ENCODE measurements at regions of chr9 and their contacts with region 1.

Region 1: DNA sequence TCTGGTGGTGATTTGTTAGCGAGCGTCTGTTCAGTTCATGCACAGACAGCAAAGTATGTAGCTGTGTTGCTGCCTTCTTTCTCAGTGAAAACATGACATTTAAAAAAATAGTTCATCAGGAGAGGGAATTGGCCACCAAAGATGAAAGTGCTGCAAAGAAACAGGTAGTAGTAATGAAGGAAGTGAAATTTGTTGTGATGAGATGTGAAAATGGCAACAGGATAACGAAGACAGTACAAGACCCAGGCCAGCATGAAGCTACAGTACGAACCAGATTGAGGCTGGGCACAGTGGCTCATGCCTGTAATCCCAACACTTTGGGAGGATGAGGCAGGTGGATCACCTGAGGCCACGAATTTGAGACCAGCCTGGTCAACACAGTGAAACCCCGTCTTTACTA is 136.0 kb downstream of the SMARCA2 start:
- DNase-seq: no peak
- ATAC-seq: no peak
- H3K4me3 ChIP-seq: no peak overlapping the region
- H3K4me3 Mint-ChIP-seq: no peak overlapping the region
- H3K27ac ChIP-seq: no peak overlapping the region
- H3K27ac Mint-ChIP-seq: peak overlapping the region; percentile 10
- H3K4me1 ChIP-seq: peaks cover 4 to 8% of the 10 kb centered on the region in 2 donors
- H3K4me1 Mint-ChIP-seq: peaks cover 50% of the 10 kb centered on the region
- H3K27me3 ChIP-seq: no peaks in the 10 kb centered on the region
- H3K27me3 Mint-ChIP-seq: no peaks in the 10 kb centered on the region
- CTCF ChIP-seq: no peak

Region 2: GRCh38 chr9:1231998-1232919 is 918.9 kb before region 1 on chr9:
- CTCF ChIA-PET with region 1: no interaction called
- POLR2A ChIA-PET with region 1: no interaction called
- intact Hi-C with region 1: no loop called
- DNase-seq: no peak
- ATAC-seq: no peak
- H3K4me3 ChIP-seq: no peak overlapping the region
- H3K4me3 Mint-ChIP-seq: no peak overlapping the region
- H3K27ac ChIP-seq: no peak overlapping the region
- H3K27ac Mint-ChIP-seq: no peak overlapping the region
- H3K4me1 ChIP-seq: no peaks in the 10 kb centered on the region
- H3K4me1 Mint-ChIP-seq: no peaks in the 10 kb centered on the region
- H3K27me3 ChIP-seq: no peaks in the 10 kb centered on the region
- H3K27me3 Mint-ChIP-seq: no peaks in the 10 kb centered on the region
- CTCF ChIP-seq: no peak

Region 3: DNA sequence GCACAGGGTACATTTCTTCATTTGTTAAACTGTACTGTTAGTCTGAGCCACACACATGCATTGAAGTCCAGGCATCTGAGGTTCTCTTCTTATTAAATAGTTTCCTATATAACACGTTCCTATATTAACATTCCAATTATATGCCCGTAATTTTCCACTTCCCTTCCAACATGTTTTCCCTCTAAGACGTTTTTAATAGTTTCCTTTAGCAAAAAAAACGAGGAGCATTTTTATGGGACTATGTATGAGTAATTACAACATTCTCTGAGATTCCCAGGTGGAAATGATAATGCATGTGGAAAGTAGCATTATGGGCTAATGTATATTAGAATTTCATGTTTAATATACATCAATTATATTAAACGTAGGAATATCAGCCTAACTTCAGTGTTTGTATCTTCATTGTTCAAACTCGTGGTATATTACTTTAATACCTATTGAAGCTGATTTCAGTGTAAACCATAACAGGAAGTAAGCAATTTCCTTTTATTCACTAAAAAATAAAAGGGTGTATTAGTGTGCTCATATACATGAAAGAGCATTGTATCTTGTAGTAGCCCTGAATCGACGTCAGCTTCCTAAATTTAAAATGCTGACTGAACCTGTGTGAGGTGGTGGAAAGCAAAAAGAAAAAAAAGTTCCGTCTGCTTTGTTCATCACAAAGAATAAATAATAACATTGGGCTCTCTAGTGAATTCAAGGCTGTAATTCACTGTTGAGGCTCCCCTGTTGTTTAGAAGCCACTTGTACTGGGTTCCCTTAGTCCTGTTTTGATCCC is 124.8 kb before region 1 on chr9:
- CTCF ChIA-PET with region 1: no interaction called
- POLR2A ChIA-PET with region 1: no interaction called
- intact Hi-C with region 1: no loop called
- DNase-seq: no peak
- ATAC-seq: peak; percentile 36
- H3K4me3 ChIP-seq: no peak overlapping the region
- H3K4me3 Mint-ChIP-seq: peak overlapping the region; percentile 20
- H3K27ac ChIP-seq: no peak overlapping the region
- H3K27ac Mint-ChIP-seq: peak overlapping the region; percentile 6
- H3K4me1 ChIP-seq: peaks cover 55 to 67% of the 10 kb centered on the region in 2 donors
- H3K4me1 Mint-ChIP-seq: peaks cover 84% of the 10 kb centered on the region
- H3K27me3 ChIP-seq: no peaks in the 10 kb centered on the region
- H3K27me3 Mint-ChIP-seq: no peaks in the 10 kb centered on the region
- CTCF ChIP-seq: no peak

Region 4: GRCh38 chr9:2181792-2182191 is 30.6 kb after region 1 on chr9:
- CTCF ChIA-PET with region 1: interaction called, 10 read pairs
- POLR2A ChIA-PET with region 1: no interaction called
- intact Hi-C with region 1: no loop called
- DNase-seq: peak; percentile 16
- ATAC-seq: no peak
- H3K4me3 ChIP-seq: no peak overlapping the region
- H3K4me3 Mint-ChIP-seq: no peak overlapping the region
- H3K27ac ChIP-seq: no peak overlapping the region
- H3K27ac Mint-ChIP-seq: no peak overlapping the region
- H3K4me1 ChIP-seq: no peaks in the 10 kb centered on the region
- H3K4me1 Mint-ChIP-seq: no peaks in the 10 kb centered on the region
- H3K27me3 ChIP-seq: no peaks in the 10 kb centered on the region
- H3K27me3 Mint-ChIP-seq: no peaks in the 10 kb centered on the region
- CTCF ChIP-seq: peak; percentile 43

Region 5: GRCh38 chr9:2545881-2546490 is 394.8 kb after region 1 on chr9:
- CTCF ChIA-PET with region 1: no interaction called
- POLR2A ChIA-PET with region 1: no interaction called
- intact Hi-C with region 1: no loop called
- DNase-seq: no peak
- ATAC-seq: no peak
- H3K4me3 ChIP-seq: no peak overlapping the region
- H3K4me3 Mint-ChIP-seq: no peak overlapping the region
- H3K27ac ChIP-seq: no peak overlapping the region
- H3K27ac Mint-ChIP-seq: no peak overlapping the region
- H3K4me1 ChIP-seq: no peaks in the 10 kb centered on the region
- H3K4me1 Mint-ChIP-seq: no peaks in the 10 kb centered on the region
- H3K27me3 ChIP-seq: peaks cover 0 to 4% (median 0%) of the 10 kb centered on the region in 4 experiments
- H3K27me3 Mint-ChIP-seq: peaks cover 21% of the 10 kb centered on the region
- CTCF ChIP-seq: no peak